Activated naive CD4-positive, alpha-beta T cell treated with anti-CD3 and anti-CD28 coated beads for 36 hours (primary cell): ENCODE measurements at regions of chr17 and their contacts with region 1.

Region 1: GRCh38 chr17:1628856-1629646 is 417 bp upstream of the SLC43A2 start:
- DNase-seq: peak; percentile 86
- H3K4me3 Mint-ChIP-seq: peak overlapping the region; percentile 83
- H3K27ac Mint-ChIP-seq: no peak overlapping the region
- H3K4me1 Mint-ChIP-seq: peaks cover 18% of the 10 kb centered on the region
- H3K27me3 Mint-ChIP-seq: peaks cover 15% of the 10 kb centered on the region

Region 2: DNA sequence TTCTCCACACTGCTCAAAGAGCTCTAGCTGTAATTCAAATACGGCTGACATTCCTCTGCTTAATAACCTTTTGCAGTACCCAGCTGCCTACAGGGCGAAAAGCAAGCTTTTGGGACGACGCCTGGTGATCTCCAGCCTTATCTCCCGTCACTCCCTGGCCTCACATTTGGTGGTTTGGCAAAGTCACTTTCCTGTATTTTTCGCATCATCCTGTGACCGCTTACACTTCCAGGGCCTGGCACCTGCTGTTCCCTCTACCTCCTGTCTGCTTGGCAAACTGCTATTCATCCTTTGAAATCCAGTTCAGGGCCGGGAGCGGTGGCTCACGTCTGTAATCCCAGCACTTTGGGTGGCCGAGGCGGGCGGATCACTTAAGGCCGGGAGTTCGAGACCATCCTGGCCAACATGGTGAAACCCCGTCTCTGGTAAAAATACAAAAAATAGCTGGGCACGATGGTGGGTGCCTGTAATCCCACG is 361.5 kb before region 1 on chr17:
- CTCF ChIA-PET with region 1: no interaction called
- intact Hi-C with region 1: loop called (anchors 5 kb)
- DNase-seq: no peak
- H3K4me3 Mint-ChIP-seq: peak overlapping the region; percentile 72
- H3K27ac Mint-ChIP-seq: no peak overlapping the region
- H3K4me1 Mint-ChIP-seq: peaks cover 8% of the 10 kb centered on the region
- H3K27me3 Mint-ChIP-seq: peaks cover 21% of the 10 kb centered on the region

Region 3: GRCh38 chr17:1275962-1276736 is 352.9 kb before region 1 on chr17:
- CTCF ChIA-PET with region 1: interaction called, 3 read pairs
- intact Hi-C with region 1: loop called (anchors 5 kb)
- DNase-seq: peak; percentile 79
- H3K4me3 Mint-ChIP-seq: no peak overlapping the region
- H3K27ac Mint-ChIP-seq: no peak overlapping the region
- H3K4me1 Mint-ChIP-seq: peaks cover 5% of the 10 kb centered on the region
- H3K27me3 Mint-ChIP-seq: peaks cover 33% of the 10 kb centered on the region

Region 4: GRCh38 chr17:1566545-1567199 is 62.4 kb before region 1 on chr17:
- CTCF ChIA-PET with region 1: interaction called, 5 read pairs
- intact Hi-C with region 1: loop called (anchors 2 kb)
- DNase-seq: peak; percentile 74
- H3K4me3 Mint-ChIP-seq: peak overlapping the region; percentile 49
- H3K27ac Mint-ChIP-seq: peak overlapping the region; percentile 79
- H3K4me1 Mint-ChIP-seq: peaks cover 28% of the 10 kb centered on the region
- H3K27me3 Mint-ChIP-seq: no peaks in the 10 kb centered on the region

Region 5: DNA sequence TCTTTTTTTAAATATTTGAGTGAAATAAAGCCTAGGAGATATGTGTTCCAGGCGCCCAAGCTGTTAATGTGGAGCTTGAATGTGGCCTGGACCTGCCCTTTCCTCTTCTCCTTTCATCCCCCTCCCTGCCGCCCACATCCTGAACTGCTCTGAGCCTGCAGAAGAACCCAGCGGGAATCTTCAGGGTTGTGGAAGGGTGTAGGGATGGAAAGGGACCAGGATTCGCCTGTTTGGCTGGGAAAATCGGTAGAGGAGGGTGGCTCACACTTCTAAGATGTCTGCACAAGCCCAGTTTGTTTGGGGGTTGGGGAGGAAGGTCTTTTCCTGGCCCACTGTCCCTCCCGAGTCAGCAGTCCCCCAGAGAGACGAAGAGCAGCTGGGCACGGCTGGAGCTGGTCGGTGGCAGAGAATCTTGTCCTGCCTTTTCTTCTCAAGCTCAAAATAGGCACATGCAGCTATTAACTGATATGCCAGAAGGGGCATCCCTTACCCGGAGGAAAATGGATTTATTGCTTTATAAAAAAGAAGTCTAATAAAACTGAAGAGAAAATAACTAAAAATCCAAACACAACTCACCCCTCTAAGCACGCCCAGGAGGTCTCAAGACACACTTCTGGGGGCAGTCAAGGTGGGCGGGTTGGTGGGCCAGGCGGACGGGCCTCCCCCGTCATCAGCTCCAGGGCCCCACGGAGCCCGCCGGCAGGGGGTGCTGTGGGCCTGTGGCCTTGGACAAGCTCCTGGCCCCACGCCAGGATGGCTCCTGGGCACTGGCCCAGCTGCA is 54.9 kb before region 1 on chr17:
- CTCF ChIA-PET with region 1: interaction called, 50 read pairs
- intact Hi-C with region 1: loop called (anchors 1 kb)
- DNase-seq: peak; percentile 69
- H3K4me3 Mint-ChIP-seq: no peak overlapping the region
- H3K27ac Mint-ChIP-seq: no peak overlapping the region
- H3K4me1 Mint-ChIP-seq: no peaks in the 10 kb centered on the region
- H3K27me3 Mint-ChIP-seq: no peaks in the 10 kb centered on the region

Region 6: GRCh38 chr17:1588801-1589456 is 40.1 kb before region 1 on chr17:
- CTCF ChIA-PET with region 1: no interaction called
- intact Hi-C with region 1: no loop called
- DNase-seq: no peak
- H3K4me3 Mint-ChIP-seq: no peak overlapping the region
- H3K27ac Mint-ChIP-seq: no peak overlapping the region
- H3K4me1 Mint-ChIP-seq: peaks cover 8% of the 10 kb centered on the region
- H3K27me3 Mint-ChIP-seq: no peaks in the 10 kb centered on the region

Region 7: GRCh38 chr17:1658100-1658499 is 29.0 kb after region 1 on chr17:
- CTCF ChIA-PET with region 1: no interaction called
- intact Hi-C with region 1: no loop called
- DNase-seq: no peak
- H3K4me3 Mint-ChIP-seq: no peak overlapping the region
- H3K27ac Mint-ChIP-seq: no peak overlapping the region
- H3K4me1 Mint-ChIP-seq: no peaks in the 10 kb centered on the region
- H3K27me3 Mint-ChIP-seq: no peaks in the 10 kb centered on the region